ENCODE measurements at regions of chr13 and their contacts with region 1.

Region 1: DNA sequence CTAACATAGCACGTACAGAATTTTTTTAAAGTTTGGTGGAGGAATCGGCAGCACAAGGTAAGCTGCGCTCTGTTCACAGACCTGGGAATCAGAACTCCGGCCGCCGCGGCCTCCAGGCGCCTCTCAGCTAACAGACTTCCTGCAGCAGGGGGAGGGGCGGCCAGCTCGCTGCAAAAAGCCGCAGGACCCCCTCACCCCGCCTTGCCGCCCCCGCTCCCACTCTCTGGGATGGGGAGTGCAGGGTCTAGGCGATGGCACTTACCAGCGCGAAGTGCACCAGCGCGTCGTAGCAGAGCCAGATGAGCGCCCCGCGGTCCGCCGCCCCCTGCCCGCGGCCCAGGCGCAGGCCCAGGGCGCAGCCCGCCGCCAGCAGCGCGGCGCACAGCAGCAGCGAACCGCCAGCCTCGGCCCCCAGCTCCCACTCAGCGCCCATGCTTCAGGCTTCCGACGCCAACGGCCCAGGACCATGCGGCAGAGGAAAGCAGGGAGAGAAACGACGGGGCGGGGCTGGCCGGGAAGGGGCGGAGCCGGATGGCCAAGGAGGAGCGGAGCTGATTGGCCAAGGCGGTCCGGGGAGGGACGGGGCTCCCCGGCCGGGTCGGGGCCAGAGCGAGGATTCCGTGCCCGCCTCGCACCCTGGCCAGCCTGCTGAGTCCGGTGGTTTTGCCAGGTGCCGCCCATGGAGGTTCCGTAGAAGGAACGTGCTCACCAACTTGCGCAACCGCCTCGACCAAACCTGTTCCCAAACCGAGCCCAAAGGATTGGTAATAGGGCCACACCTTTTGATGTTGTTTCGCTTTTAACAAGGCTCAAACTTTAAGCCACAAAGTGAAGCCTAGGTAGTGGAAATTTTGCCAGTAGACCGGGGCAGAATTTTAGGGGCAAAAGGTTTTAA is at the start of gene EBPL:
- DNase-seq: peak; percentile 85
- ATAC-seq: peak; percentile 96
- H3K4me3 Mint-ChIP-seq: peak within 1 kb of the TSS; percentile 89
- H3K27ac Mint-ChIP-seq: peak within 1 kb of the TSS; percentile 79
- H3K4me1 Mint-ChIP-seq: peaks cover 27% of the 10 kb centered on the region
- H3K27me3 Mint-ChIP-seq: no peaks in the 10 kb centered on the region
- CTCF ChIP-seq: no peak
- total RNA-seq, gene EBPL: 20.0 and 22.4 TPM in 2 replicates

Region 2: DNA sequence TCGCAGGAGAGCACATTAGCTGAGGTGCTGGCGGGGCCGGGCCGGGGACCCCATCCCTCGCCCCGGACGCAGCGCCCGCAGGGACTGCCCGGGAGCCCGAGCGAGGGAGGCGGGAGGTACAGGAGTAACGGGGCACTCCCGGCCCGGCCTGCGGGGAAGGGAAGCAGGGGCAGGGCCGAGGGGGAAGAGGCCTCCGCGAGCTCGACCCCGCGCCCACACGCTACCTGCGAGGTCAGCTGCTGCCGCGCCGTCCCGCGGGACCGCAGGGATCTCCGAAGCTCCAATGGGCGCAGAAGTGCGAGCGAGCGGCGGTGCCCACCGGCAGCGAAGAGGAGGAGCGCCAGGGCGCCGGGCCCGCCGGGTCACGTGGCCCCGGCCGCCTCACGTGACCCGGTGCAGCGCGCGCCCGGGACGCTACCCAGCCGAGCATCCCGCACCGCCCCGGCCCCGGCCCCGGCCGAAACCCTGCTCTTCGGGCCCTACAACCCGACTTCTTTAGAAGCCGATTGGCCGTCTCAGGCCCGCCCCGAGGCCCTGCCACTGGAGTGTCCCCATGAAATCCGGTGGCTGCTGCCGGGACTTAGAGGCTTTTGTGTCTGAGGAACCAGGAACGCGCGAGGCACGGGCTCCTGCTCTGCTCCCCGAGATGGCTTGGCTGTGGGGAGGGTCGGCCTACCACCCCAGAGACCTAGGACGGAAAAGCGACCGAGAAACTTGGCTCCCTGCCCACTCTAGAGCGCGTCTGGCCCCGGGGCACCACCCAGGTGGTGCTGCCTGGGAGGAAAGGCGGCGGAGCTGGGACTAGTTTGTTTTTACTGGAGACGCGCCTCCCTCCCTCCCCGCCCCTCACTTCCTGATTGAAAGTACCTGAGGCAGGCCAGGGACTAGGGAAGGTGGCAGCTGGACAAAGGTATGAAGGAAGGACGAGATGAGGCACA is 105.8 kb before region 1 on chr13 and contains the start of gene RCBTB1:
- CTCF ChIA-PET with region 1: no interaction called
- POLR2A ChIA-PET with region 1: no interaction called
- intact Hi-C with region 1: loop called (anchors 2 kb)
- DNase-seq: peak; percentile 73
- ATAC-seq: peak; percentile 87
- H3K4me3 Mint-ChIP-seq: peak within 1 kb of the TSS; percentile 90
- H3K27ac Mint-ChIP-seq: peak within 1 kb of the TSS; percentile 86
- H3K4me1 Mint-ChIP-seq: peaks cover 31% of the 10 kb centered on the region
- H3K27me3 Mint-ChIP-seq: no peaks in the 10 kb centered on the region
- CTCF ChIP-seq: no peak
- total RNA-seq, gene RCBTB1: 19.7 and 22.6 TPM in 2 replicates

Region 3: GRCh38 chr13:49627831-49628652 is 63.2 kb before region 1 on chr13 and contains the start of gene ARL11:
- CTCF ChIA-PET with region 1: no interaction called
- POLR2A ChIA-PET with region 1: interaction called, 16 read pairs
- intact Hi-C with region 1: no loop called
- DNase-seq: peak; percentile 78
- ATAC-seq: peak; percentile 98
- H3K4me3 Mint-ChIP-seq: peak within 1 kb of the TSS; percentile 99
- H3K27ac Mint-ChIP-seq: peak within 1 kb of the TSS; percentile 98
- H3K4me1 Mint-ChIP-seq: peaks cover 37% of the 10 kb centered on the region
- H3K27me3 Mint-ChIP-seq: no peaks in the 10 kb centered on the region
- CTCF ChIP-seq: no peak
- total RNA-seq, gene ARL11: 9.5 and 10.7 TPM in 2 replicates

Region 4: DNA sequence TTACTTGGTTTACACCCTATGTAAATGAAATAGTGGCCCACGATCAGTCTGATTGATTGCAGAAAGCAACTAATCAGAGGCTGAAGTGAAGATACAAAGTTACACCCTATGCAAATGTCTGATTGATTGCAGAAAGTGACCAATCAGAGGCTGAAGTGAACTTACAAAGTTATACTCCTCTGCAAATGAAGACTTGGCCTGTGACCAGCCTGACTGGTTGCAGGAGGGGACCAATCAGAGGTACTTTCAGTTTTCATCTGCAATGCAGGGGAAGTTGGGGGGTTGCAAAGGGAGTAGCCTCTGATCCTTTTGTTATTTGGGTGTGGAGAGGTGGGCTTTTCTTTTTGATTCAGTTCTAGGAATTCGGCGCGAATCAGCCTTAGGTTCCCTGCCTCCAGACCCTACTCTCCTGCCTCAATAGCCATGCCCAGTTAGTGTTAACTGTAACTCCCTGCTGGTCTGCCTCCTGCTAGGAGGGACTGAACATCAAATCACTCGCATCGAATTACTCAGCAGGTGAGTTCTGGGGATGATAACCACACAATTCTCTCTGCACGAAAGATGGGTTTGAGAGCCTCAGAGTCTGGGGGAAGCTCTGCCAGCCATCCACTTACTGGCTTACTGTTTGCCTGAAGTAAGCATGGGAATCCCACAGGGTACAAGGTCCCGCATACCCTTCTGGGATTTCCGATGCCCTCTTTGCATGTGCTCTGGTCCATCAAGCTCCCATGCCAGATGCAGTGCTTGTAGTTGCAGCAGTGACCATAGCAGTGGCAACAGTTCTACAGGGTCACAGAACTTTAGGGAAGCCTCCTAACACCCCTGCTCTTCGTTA is 55.4 kb before region 1 on chr13:
- CTCF ChIA-PET with region 1: no interaction called
- POLR2A ChIA-PET with region 1: no interaction called
- intact Hi-C with region 1: loop called (anchors 5 kb)
- DNase-seq: no peak
- ATAC-seq: peak; percentile 86
- H3K4me3 Mint-ChIP-seq: peak overlapping the region; percentile 73
- H3K27ac Mint-ChIP-seq: peak overlapping the region; percentile 75
- H3K4me1 Mint-ChIP-seq: peaks cover 52% of the 10 kb centered on the region
- H3K27me3 Mint-ChIP-seq: no peaks in the 10 kb centered on the region
- CTCF ChIP-seq: no peak

Region 5: GRCh38 chr13:49652355-49653305 is 38.6 kb before region 1 on chr13:
- CTCF ChIA-PET with region 1: no interaction called
- POLR2A ChIA-PET with region 1: no interaction called
- intact Hi-C with region 1: no loop called
- DNase-seq: no peak
- ATAC-seq: peak; percentile 78
- H3K4me3 Mint-ChIP-seq: no peak overlapping the region
- H3K27ac Mint-ChIP-seq: no peak overlapping the region
- H3K4me1 Mint-ChIP-seq: peaks cover 6% of the 10 kb centered on the region
- H3K27me3 Mint-ChIP-seq: no peaks in the 10 kb centered on the region
- CTCF ChIP-seq: no peak

Region 6: DNA sequence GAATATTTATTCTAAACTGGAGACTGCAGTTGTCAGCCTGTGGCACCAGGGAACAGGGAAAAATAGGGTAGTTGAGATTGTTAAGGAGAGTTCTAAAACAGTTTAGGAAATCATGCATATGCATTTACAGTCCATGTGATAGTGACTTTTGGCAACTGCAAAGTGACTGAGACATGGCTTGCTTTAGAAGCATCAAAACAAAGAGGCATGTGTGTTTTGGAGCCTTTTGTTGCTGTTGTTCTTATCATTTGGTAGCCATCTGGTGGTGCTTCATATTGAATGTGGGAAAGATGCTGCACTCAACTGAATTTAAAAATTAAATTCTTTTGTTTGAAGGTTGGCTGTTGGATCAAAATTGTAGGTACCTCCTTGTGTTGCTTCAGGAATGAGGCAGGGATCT is 10.3 kb after region 1 on chr13:
- CTCF ChIA-PET with region 1: no interaction called
- POLR2A ChIA-PET with region 1: interaction called, 14 read pairs
- intact Hi-C with region 1: no loop called
- DNase-seq: no peak
- ATAC-seq: no peak
- H3K4me3 Mint-ChIP-seq: no peak overlapping the region
- H3K27ac Mint-ChIP-seq: no peak overlapping the region
- H3K4me1 Mint-ChIP-seq: peaks cover 5% of the 10 kb centered on the region
- H3K27me3 Mint-ChIP-seq: no peaks in the 10 kb centered on the region
- CTCF ChIP-seq: no peak

Measured in activated B cell treated with CpG ODN at 0.5 μM for 24 hours (primary cell).